Left cardiac atrium (tissue), 4 donors: ENCODE measurements at regions of chr12 and their contacts with region 1.

Region 1: DNA sequence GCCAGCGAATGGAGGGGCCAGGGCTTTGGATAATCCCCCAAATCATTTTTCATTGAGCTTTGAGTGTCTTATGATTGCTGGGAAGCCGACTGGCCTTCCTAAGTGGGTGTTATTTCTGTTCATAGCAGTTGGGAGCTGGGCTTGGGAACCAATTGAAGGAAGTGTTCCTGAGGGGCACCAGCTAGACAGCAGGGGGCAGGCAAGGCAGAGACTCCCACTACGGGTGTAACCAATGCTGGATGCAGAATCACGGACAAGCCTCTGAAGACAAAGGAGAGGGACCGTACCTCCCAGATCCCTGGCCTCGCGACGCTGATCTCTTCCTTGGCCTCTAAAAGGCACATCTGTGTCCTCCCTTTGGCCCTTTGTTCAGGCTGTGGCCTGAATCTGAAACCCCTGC is 148.9 kb upstream of the PRMT8 start:
- DNase-seq: peak; percentile 73
- ATAC-seq: peak; percentile 90 to 93

Region 2: GRCh38 chr12:3236345-3237187 is 105.5 kb before region 1 on chr12:
- intact Hi-C with region 1: no loop called
- DNase-seq: peak; percentile 64
- ATAC-seq: peak; percentile 71 to 88

Region 3: GRCh38 chr12:3641428-3642018 is 299.5 kb after region 1 on chr12:
- intact Hi-C with region 1: loop called in 1 of 2 experiments (anchors 10 kb)
- DNase-seq: peak; percentile 37
- ATAC-seq: peak in 1 of 2 donors; percentile 54